ENCODE measurements at regions of chr21 and their contacts with region 1.

Region 1: GRCh38 chr21:35051287-35051818 is 2.3 kb upstream of the RUNX1 start:
- DNase-seq: peak; percentile 86 to 95
- H3K4me3 ChIP-seq: peak overlapping the region; percentile 17; the same call in 1 of the 2 replicates
- H3K27ac ChIP-seq: peak overlapping the region; percentile 99
- H3K4me1 ChIP-seq: peaks cover 40% of the 10 kb centered on the region
- H3K27me3 ChIP-seq: no peaks in the 10 kb centered on the region
- CTCF ChIP-seq: peak; percentile 71

Region 2: GRCh38 chr21:34745557-34746255 is 305.6 kb before region 1 on chr21:
- CTCF ChIA-PET with region 1: no interaction called
- POLR2A ChIA-PET with region 1: no interaction called
- intact Hi-C with region 1: loop called (anchors 1 kb)
- DNase-seq: peak; percentile 56
- H3K4me3 ChIP-seq: no peak overlapping the region
- H3K27ac ChIP-seq: no peak overlapping the region
- H3K4me1 ChIP-seq: peaks cover 12% of the 10 kb centered on the region
- H3K27me3 ChIP-seq: no peaks in the 10 kb centered on the region
- CTCF ChIP-seq: peak; percentile 86

Region 3: GRCh38 chr21:34967509-34968289 is 83.7 kb before region 1 on chr21:
- CTCF ChIA-PET with region 1: no interaction called
- POLR2A ChIA-PET with region 1: no interaction called
- intact Hi-C with region 1: loop called (anchors 5 kb)
- DNase-seq: peak; percentile 60 to 87
- H3K4me3 ChIP-seq: no peak overlapping the region
- H3K27ac ChIP-seq: peak overlapping the region; percentile 92
- H3K4me1 ChIP-seq: peaks cover 54% of the 10 kb centered on the region
- H3K27me3 ChIP-seq: no peaks in the 10 kb centered on the region
- CTCF ChIP-seq: no peak

Region 4: DNA sequence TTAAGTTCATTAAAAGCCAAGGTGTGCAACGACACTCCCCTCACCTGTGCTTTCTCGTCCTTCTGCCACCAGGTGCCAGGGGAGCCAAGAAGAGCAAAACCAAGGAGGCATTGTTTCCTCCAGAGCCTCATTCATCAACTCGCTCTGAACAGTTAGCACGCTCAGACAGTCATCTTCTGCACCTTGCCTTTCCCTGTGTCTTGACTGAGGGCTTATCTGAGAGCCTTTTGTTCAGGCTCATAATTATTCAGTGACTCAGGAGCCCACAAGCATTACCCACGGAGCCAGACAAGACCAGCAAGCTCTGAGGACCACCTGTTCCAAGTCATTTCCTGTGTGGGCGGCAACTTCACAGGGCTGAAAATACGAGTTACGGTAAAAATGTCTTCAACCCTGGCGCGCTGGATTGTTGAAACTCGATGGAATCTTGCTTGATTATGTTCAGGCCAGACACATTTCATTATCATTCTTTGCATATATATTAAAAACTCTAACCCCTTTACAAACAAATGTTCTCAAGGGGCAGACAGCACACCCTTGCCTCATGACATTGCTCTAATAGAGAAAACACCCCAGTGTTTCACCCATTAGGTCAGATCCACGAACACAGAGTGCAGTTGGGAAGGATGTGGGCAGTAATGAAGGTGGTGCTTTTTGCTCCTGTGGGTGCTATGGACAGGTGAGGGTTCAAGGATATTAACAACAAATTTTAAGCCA is 87.5 kb after region 1 on chr21:
- CTCF ChIA-PET with region 1: interaction called, 6 read pairs
- POLR2A ChIA-PET with region 1: interaction called, 9 read pairs
- intact Hi-C with region 1: loop called (anchors 1 kb)
- DNase-seq: peak; percentile 74 to 95
- H3K4me3 ChIP-seq: peak overlapping the region; percentile 7; the same call in 1 of the 2 replicates
- H3K27ac ChIP-seq: peak overlapping the region; percentile 99
- H3K4me1 ChIP-seq: peaks cover 53% of the 10 kb centered on the region
- H3K27me3 ChIP-seq: no peaks in the 10 kb centered on the region
- CTCF ChIP-seq: no peak

Region 5: GRCh38 chr21:35217504-35218060 is 166.2 kb after region 1 on chr21:
- CTCF ChIA-PET with region 1: no interaction called
- POLR2A ChIA-PET with region 1: no interaction called
- intact Hi-C with region 1: loop called (anchors 1 kb)
- DNase-seq: peak; percentile 88 to 100
- H3K4me3 ChIP-seq: no peak overlapping the region
- H3K27ac ChIP-seq: peak overlapping the region; percentile 100
- H3K4me1 ChIP-seq: peaks cover 55% of the 10 kb centered on the region
- H3K27me3 ChIP-seq: no peaks in the 10 kb centered on the region
- CTCF ChIP-seq: no peak

Region 6: GRCh38 chr21:35400233-35400957 is 349.0 kb after region 1 on chr21:
- CTCF ChIA-PET with region 1: no interaction called
- POLR2A ChIA-PET with region 1: no interaction called
- intact Hi-C with region 1: loop called (anchors 1 kb)
- DNase-seq: peak; percentile 19 to 77
- H3K4me3 ChIP-seq: no peak overlapping the region
- H3K27ac ChIP-seq: peak overlapping the region; percentile 52
- H3K4me1 ChIP-seq: peaks cover 32% of the 10 kb centered on the region
- H3K27me3 ChIP-seq: no peaks in the 10 kb centered on the region
- CTCF ChIP-seq: peak; percentile 68

Region 7: DNA sequence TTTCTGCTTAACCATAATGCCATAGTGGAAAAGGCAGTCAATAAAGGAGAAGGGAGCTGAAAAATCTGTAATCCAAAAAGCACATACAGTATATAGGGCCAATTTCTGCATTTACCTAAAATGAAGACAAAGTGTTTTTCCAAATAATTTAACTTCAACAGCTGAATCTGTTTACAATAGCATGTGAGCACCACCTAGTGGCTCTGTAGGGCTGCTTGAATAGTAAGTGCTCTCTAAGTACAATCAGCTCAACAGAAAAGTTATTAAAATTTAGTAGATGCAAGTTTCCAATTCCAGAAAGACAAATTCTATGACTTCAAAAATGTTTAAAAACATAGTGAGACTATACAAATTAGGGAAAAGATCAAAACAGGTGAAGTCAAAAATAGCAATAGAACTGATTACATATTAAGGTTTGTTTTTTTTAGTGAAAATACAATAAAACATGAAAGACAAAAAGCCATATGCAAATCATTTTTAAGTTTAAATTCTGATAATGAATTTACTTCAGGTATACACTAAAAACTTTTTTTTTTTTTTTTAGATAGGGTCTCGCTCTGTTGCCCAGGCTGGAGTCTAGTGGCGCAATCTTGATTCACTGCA is 788.9 kb after region 1 on chr21:
- CTCF ChIA-PET with region 1: no interaction called
- POLR2A ChIA-PET with region 1: interaction called, 6 read pairs
- intact Hi-C with region 1: loop called (anchors 1 kb)
- DNase-seq: peak; percentile 32 to 39
- H3K4me3 ChIP-seq: no peak overlapping the region
- H3K27ac ChIP-seq: no peak overlapping the region
- H3K4me1 ChIP-seq: no peaks in the 10 kb centered on the region
- H3K27me3 ChIP-seq: no peaks in the 10 kb centered on the region
- CTCF ChIP-seq: peak; percentile 83

Region 8: GRCh38 chr21:36297921-36298594 is 1246.7 kb after region 1 on chr21:
- CTCF ChIA-PET with region 1: no interaction called
- POLR2A ChIA-PET with region 1: no interaction called
- intact Hi-C with region 1: no loop called
- DNase-seq: peak; percentile 55 to 69
- H3K4me3 ChIP-seq: no peak overlapping the region
- H3K27ac ChIP-seq: peak overlapping the region; percentile 56
- H3K4me1 ChIP-seq: peaks cover 9% of the 10 kb centered on the region; the same call in 1 of the 2 replicates
- H3K27me3 ChIP-seq: no peaks in the 10 kb centered on the region
- CTCF ChIP-seq: no peak

Measured in PC-9 (cell line).